Heart right ventricle (tissue), 16 donors: ENCODE measurements at regions of chr18 and their contacts with region 1.

Region 1: GRCh38 chr18:69874058-69874457 is 73.6 kb downstream of the CD226 start:
- DNase-seq: no peak
- ATAC-seq: no peak
- H3K4me3 ChIP-seq: no peak overlapping the region
- H3K27ac ChIP-seq: no peak overlapping the region
- H3K4me1 ChIP-seq: peaks cover 0 to 4% (median 0%) of the 10 kb centered on the region in 9 donors
- H3K27me3 ChIP-seq: no peaks in the 10 kb centered on the region
- CTCF ChIP-seq: no peak

Region 2: GRCh38 chr18:69705987-69706386 is 168.1 kb before region 1 on chr18:
- intact Hi-C with region 1: no loop called
- DNase-seq: no peak
- ATAC-seq: no peak
- H3K4me3 ChIP-seq: no peak overlapping the region
- H3K27ac ChIP-seq: no peak overlapping the region
- H3K4me1 ChIP-seq: no peaks in the 10 kb centered on the region
- H3K27me3 ChIP-seq: no peaks in the 10 kb centered on the region
- CTCF ChIP-seq: no peak

Region 3: GRCh38 chr18:69935319-69936190 is 61.5 kb after region 1 on chr18:
- intact Hi-C with region 1: loop called in 1 of 10 experiments (anchors 10 kb)
- DNase-seq: no peak
- ATAC-seq: peak in 3 of 8 donors; percentile 8 to 29 (median 11)
- H3K4me3 ChIP-seq: no peak overlapping the region
- H3K27ac ChIP-seq: peak overlapping the region in 1 of 10 donors; percentile 55
- H3K4me1 ChIP-seq: peaks cover 0 to 10% (median 5%) of the 10 kb centered on the region in 9 donors
- H3K27me3 ChIP-seq: no peaks in the 10 kb centered on the region
- CTCF ChIP-seq: no peak

Region 4: DNA sequence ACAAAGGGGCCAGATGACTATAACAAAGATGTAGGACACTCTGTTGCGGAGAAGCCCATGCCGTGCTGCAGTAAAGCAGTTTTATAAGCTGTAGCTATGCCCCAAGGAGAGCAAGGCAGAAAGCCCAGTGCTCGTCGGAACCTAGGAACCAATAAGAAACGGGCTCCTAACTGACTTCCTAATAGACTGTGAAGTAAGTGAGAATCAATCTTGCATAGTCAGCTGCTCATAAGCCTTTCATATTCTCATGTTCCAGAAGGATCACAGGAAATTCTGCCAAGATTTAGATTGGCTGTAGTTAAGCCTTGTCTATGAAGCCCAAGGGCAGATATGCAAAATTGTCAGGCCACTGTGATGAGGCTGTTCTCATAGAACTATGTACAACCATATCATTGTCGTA is 233.0 kb after region 1 on chr18:
- intact Hi-C with region 1: no loop called
- DNase-seq: no peak
- ATAC-seq: no peak
- H3K4me3 ChIP-seq: no peak overlapping the region
- H3K27ac ChIP-seq: no peak overlapping the region
- H3K4me1 ChIP-seq: no peaks in the 10 kb centered on the region
- H3K27me3 ChIP-seq: no peaks in the 10 kb centered on the region
- CTCF ChIP-seq: no peak